GM12878 (cell line): ENCODE measurements at regions of chr6 and their contacts with region 1.

Region 1: DNA sequence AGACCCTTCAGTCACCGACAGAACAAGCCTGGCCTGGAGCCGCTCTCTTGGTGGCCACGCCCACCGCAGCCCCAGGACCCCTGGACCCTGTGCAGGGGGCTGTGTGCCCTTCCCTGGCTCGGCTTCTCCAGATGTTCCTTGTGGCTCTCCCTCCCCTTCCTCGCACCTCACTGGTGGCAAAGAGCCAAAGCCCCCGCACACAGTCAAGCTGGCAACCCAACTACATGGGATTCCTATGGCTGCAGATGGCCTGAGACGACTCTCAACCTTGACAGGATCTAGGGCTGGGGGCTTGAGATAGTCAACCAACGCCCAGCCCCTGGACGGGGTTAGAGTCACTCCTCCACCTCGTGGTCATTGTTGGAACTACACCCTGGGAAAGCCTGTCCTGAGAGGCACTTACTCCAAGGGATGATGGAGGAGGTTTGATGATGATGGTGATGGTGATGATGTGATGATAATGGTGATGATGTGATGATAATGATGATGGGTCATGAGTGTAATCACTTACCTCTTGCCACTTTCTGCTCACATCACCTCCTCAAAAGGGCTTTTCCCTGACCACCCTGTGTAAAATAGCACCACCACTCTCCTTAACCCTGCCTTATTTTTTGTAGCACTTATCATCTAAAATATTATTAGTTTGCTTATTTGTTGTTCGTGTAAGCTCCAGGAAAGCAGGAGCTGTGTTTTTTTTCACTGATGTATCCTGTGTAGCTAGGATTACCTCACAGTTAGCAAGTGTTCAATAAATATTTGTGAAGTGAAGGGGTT is 278.4 kb downstream of the LRFN2 start:
- DNase-seq: peak; percentile 11
- ATAC-seq: peak; percentile 94
- H3K4me3 ChIP-seq: no peak overlapping the region
- H3K27ac ChIP-seq: no peak overlapping the region
- H3K4me1 ChIP-seq: no peaks in the 10 kb centered on the region
- H3K27me3 ChIP-seq: peaks cover 3 to 9% of the 10 kb centered on the region in 2 experiments; a peak in 3 of 4 replicates
- CTCF ChIP-seq: peak; percentile 84 to 91 (median 89)
- EP300 ChIP-seq: no peak
- POLR2A ChIP-seq: no peak
- RAD21 ChIP-seq: peak; percentile 73

Region 2: DNA sequence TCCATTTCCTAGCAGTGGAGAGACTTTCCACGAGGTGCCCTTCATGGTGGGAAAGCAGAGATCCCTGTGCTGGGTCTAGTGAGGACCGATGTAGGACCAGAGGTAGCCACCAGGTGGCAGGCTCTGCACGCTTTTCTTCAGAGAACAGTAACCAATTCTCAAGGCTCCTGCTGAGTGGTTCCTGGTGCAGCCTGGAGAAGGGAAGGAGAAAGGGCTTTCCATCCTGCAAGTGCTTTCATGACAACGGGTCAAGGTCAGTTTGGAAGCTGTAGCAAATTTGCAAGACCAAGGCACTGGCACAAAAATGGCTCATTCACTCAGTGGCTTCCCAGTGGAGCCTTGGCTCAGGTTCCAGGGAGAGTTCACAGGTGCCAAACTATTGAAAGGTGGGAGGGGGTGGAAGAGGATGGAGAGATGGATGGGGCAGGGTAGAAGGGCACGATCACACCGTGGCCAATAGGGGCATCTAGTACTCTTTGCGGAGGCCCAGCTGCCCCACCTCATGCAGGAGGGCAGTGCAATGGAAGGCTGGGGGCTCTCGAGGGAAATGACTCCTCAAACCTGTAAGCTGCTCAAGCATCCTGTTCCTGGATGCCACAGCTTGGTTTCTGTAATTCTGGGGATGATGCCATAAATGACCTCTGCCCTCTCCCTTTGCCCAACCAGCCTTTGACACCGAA is 960.7 kb before region 1 on chr6:
- CTCF ChIA-PET with region 1: interaction called, 3 read pairs
- POLR2A ChIA-PET with region 1: no interaction called
- RAD21 ChIA-PET with region 1: no interaction called
- SMC1A ChIA-PET with region 1: interaction called, 3 read pairs
- in situ Hi-C with region 1: no loop called
- intact Hi-C with region 1: loop called (anchors 10 kb)
- DNase-seq: no peak
- ATAC-seq: peak; percentile 96
- H3K4me3 ChIP-seq: no peak overlapping the region
- H3K27ac ChIP-seq: no peak overlapping the region
- H3K4me1 ChIP-seq: peaks cover 2% of the 10 kb centered on the region
- H3K27me3 ChIP-seq: no peaks in the 10 kb centered on the region
- CTCF ChIP-seq: peak; percentile 86 to 93 (median 92)
- EP300 ChIP-seq: no peak
- POLR2A ChIP-seq: no peak
- RAD21 ChIP-seq: peak; percentile 78

Region 3: DNA sequence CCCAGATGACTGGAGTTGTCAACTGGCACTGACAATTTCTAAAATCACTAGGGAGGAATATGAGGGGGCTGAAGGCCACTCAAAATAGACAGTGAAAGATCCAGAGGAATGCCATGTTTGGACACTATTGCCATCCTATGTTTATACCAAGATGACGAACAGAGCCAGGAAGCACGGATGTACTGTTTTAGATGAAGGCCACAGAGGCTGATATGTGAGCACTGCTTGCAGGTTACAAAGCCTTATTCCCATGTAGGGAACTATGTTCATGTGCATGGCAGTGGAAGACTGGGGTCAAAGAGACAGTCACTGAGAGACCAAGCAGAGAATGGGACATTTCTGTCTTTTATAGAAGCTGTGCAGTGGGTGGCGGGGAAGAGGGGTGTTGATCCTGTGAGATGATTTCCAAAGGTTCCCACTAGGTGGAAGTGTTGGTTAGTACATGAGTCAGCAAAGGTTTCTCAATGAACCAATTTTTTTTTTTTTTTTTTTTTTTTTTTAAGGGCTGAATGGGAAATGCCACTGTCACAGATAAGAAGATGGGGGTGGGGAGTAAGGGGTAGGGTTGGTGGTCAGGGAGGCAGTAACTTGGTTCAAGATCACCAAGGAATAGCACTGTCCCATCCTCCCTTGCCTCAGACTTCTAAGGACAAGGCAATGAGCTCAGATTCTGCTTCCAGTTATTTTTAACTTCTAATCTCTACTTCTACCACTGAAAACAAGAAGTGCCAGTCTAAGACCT is 327.7 kb before region 1 on chr6:
- CTCF ChIA-PET with region 1: interaction called, 72 read pairs
- POLR2A ChIA-PET with region 1: interaction called, 3 read pairs
- RAD21 ChIA-PET with region 1: interaction called, 78 read pairs
- SMC1A ChIA-PET with region 1: interaction called, 22 read pairs
- in situ Hi-C with region 1: loop called (anchors 5 kb)
- intact Hi-C with region 1: loop called (anchors 1 kb)
- DNase-seq: no peak
- ATAC-seq: peak; percentile 79
- H3K4me3 ChIP-seq: no peak overlapping the region
- H3K27ac ChIP-seq: no peak overlapping the region
- H3K4me1 ChIP-seq: no peaks in the 10 kb centered on the region
- H3K27me3 ChIP-seq: no peaks in the 10 kb centered on the region; a peak in 1 of 4 replicates
- CTCF ChIP-seq: peak; percentile 22 to 68 (median 30); a peak in 4 of 6 replicates
- EP300 ChIP-seq: no peak
- POLR2A ChIP-seq: no peak
- RAD21 ChIP-seq: peak; percentile 62

Region 4: DNA sequence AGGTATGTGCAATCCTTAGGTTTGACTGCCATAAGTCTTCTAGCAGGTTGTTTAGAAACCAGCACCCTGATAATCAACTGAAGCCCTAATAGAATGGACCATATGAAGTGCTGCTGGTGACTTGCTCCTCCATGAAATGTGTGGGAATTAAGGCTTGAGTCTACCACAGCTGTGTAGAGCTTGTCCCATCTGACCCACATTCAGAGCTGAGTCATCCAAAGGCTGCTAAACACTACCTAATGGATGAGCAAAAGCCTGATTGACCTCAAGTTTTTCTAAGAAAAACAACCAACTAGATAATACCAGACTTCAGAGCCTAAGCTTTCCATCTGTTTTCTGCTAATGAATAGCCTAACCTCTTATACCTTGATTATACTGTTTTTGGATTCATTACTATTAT is 254.1 kb before region 1 on chr6:
- CTCF ChIA-PET with region 1: interaction called, 4 read pairs
- POLR2A ChIA-PET with region 1: no interaction called
- RAD21 ChIA-PET with region 1: interaction called, 8 read pairs
- SMC1A ChIA-PET with region 1: interaction called, 11 read pairs
- in situ Hi-C with region 1: no loop called
- intact Hi-C with region 1: no loop called
- DNase-seq: no peak
- ATAC-seq: no peak
- H3K4me3 ChIP-seq: no peak overlapping the region
- H3K27ac ChIP-seq: no peak overlapping the region
- H3K4me1 ChIP-seq: no peaks in the 10 kb centered on the region
- H3K27me3 ChIP-seq: no peaks in the 10 kb centered on the region
- CTCF ChIP-seq: no peak
- EP300 ChIP-seq: no peak
- POLR2A ChIP-seq: no peak
- RAD21 ChIP-seq: no peak

Region 5: DNA sequence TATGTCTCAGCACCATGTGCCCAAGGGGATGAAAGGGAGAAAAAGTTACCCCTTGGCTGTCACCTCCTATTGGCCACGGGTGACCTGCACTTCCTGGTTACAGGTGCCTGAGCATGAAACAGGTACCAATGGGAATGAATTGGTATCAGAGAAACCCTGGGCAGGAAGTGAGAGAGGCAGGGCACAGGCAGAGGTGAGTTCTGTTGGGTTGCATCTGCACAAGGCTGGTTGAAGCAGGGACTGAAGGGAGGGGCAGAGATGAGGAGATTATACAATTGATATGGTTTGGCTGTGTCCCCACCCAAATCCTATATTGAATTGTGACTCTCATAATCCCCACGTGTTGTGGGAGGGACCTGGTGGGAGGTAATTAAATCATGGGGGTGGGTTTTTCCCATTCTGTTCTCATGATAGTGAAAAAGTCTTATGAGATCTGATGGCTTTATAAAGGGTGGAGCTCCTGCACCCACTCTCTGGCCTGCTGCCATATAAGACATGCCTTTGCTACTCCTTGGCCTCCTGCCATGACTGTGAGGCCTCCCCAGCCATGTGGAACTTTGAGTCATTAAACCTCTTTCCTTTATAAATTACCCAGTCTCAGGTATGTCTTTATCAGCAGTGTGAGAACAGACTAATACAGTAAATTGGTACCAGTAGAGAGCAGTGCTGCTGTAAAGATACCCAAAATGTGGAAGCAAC is 13.3 kb before region 1 on chr6:
- CTCF ChIA-PET with region 1: interaction called, 21 read pairs
- POLR2A ChIA-PET with region 1: no interaction called
- RAD21 ChIA-PET with region 1: interaction called, 6 read pairs
- SMC1A ChIA-PET with region 1: interaction called, 12 read pairs
- in situ Hi-C with region 1: no loop called
- intact Hi-C with region 1: no loop called
- DNase-seq: no peak
- ATAC-seq: no peak
- H3K4me3 ChIP-seq: no peak overlapping the region
- H3K27ac ChIP-seq: no peak overlapping the region
- H3K4me1 ChIP-seq: no peaks in the 10 kb centered on the region
- H3K27me3 ChIP-seq: peaks cover 0 to 2% of the 10 kb centered on the region in 2 experiments; a peak in 1 of 4 replicates
- CTCF ChIP-seq: no peak
- EP300 ChIP-seq: no peak
- POLR2A ChIP-seq: no peak
- RAD21 ChIP-seq: no peak